Cardiac septum (tissue), 1 donor: ENCODE measurements at regions of chr12 and their contacts with region 1.

Region 1: GRCh38 chr12:111024205-111024801 is 103.9 kb upstream of the MYL2 start:
- DNase-seq: no peak

Region 2: GRCh38 chr12:110983806-110984205 is 40.5 kb before region 1 on chr12:
- intact Hi-C with region 1: no loop called
- DNase-seq: no peak

Region 3: DNA sequence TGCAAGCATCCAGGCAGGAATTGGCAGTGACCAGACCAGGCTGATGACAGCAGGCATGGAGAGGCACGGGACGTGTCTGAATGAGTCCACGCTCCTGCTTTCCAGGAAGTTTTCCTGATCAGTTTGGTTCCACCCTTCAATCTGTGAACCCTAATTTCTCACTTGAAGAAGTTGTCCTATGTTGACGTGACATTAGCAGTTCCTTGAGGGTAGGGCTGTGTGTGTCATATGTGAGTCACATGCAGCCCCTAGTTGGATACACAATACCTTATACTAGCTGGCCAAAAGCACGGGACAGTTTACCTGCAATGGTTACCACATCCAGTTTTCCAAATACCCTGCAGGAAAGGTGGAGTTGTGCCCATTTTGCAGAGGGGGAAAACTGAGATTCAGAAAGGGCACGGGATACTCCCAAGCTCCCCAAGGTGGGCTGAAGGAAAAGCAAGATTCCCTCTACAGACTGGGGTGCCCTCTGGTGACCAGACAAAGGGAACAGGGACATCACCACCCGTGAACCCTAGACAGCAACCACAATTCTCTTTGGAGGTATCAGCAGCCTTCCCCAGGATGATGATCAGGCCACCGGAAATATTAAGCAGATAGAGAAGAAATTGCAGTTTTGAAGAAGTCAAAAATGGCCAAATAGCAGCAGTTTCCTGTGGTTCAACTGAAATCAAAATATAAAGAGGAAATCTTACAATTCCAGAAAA is 150.1 kb after region 1 on chr12:
- intact Hi-C with region 1: loop called (anchors 5 kb)
- DNase-seq: no peak

Region 4: GRCh38 chr12:111298582-111299436 is 274.5 kb after region 1 on chr12:
- intact Hi-C with region 1: loop called (anchors 5 kb)
- DNase-seq: no peak

Region 5: GRCh38 chr12:111313833-111314259 is 289.5 kb after region 1 on chr12:
- intact Hi-C with region 1: loop called (anchors 5 kb)
- DNase-seq: peak; percentile 85

Region 6: DNA sequence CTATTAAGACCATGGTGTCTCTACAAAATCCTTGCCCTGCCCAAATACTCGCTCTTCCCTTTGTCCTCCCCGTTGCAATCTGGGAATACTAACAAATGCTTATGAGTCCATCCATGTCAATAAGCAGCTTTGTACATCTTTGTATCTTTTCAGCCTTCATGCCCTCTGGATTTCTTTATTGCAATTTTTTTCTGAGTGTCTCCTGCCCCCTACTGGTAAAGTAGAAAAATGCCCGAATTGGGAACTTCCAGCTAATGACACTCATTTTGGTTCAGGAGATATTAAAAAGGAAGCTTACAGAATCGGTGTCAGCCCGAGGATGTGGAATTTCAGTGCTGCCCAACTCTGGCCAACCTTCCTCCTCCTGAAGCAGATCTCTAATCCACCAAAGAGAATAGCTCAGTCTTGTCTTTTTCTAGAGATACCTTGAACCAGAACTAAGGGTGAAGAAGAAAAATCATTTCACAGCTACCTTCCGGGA is 427.4 kb after region 1 on chr12:
- intact Hi-C with region 1: no loop called
- DNase-seq: no peak